ENCODE measurements at regions of chr21 and their contacts with region 1.

Region 1: DNA sequence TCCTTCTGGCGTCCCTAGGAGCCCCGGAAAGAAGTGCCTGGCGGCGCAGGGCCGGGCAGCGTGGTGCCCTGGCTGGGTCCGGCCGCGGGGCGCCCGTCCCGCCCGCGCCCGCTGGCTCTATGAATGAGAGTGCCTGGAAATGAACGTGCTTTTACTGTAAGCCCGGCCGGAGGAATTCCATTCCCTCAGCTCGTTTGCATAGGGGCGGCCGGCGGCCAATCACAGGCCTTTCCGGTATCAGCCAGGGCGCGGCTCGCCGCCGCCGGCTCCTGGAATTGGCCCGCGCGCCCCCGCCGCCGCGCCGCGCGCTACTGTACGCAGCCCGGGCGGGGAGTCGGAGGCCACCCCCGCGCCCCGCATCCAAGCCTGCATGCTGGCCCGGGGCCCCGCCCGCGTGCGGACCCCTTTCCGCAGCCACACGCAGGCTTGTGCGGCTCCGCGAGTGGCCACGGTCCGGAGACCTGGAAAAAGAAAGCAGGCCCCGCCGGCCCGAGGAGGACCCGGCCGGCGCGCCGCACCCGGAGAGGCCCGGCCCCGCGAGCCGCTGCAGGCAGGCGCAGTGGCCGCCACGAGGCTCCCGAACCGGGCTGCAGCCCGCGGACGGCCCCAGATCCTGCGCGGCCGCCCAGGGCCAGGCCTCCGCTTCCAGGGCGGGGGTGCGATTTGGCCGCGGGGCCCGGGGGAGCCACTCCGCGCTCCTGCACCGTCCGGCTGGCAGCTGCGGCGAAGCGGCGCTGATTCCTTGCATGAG is 160.4 kb downstream of the RUNX1 start:
- DNase-seq: peak; percentile 87
- ATAC-seq: peak; percentile 68
- H3K4me3 Mint-ChIP-seq: peak overlapping the region; percentile 85
- H3K27ac Mint-ChIP-seq: peak overlapping the region; percentile 95
- H3K4me1 Mint-ChIP-seq: peaks cover 45% of the 10 kb centered on the region
- H3K27me3 Mint-ChIP-seq: peaks cover 5% of the 10 kb centered on the region

Region 2: DNA sequence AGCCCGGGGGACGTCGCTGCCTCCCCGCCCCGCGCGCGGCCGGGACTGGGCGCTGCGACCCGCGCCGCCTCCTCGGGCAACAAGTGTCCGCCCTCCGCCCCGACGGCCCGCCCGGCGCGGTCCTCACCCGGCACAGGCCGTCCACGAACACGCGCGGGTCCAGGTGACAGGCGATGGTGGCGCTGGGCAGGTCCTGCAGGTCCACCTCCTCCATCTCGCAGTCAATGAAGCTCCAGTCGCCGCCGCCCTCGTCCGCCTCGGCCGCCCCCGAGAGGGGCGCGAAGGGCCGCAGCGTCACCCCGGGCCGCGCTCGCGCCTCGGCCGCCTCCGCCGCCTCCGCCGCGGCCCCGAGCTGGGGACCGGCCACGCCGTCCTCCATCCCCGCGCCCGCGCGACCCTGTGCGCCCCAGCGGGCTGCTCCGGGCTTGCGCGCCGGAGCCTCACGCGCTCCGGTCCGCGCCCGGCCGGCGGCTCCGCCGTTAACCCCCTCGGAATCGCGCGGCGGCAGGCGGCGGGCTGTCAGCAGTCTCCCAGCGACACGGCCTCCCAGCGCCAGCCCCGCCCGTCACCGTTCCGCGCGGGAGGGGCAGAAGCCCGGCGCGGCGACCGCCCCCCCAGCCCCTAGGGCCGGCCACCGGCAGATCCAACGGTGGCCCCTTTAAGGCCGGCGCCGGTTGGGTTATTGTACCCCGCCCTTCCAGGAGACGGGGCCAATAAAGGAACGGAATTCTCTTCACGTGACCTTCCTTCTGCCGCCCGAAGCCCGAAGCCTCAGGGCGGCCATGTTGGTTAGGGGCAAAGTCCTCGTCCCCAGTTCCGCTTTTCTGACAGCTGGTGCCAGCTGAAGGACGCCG is 273.9 kb before region 1 on chr21 and contains the start of gene RCAN1:
- CTCF ChIA-PET with region 1: no interaction called
- DNase-seq: peak; percentile 93
- ATAC-seq: peak; percentile 98
- H3K4me3 Mint-ChIP-seq: peak within 1 kb of the TSS; percentile 80
- H3K27ac Mint-ChIP-seq: peak within 1 kb of the TSS; percentile 83
- H3K4me1 Mint-ChIP-seq: peaks cover 20% of the 10 kb centered on the region
- H3K27me3 Mint-ChIP-seq: peaks cover 20% of the 10 kb centered on the region
- total RNA-seq, gene RCAN1: 6.5 to 13.6 TPM

Region 3: GRCh38 chr21:34807146-34807880 is 81.4 kb before region 1 on chr21:
- CTCF ChIA-PET with region 1: interaction called, 16 read pairs
- DNase-seq: peak; percentile 85
- ATAC-seq: peak; percentile 89
- H3K4me3 Mint-ChIP-seq: no peak overlapping the region
- H3K27ac Mint-ChIP-seq: peak overlapping the region; percentile 84
- H3K4me1 Mint-ChIP-seq: peaks cover 75% of the 10 kb centered on the region
- H3K27me3 Mint-ChIP-seq: no peaks in the 10 kb centered on the region

Region 4: GRCh38 chr21:34933609-34934335 is 45.0 kb after region 1 on chr21:
- CTCF ChIA-PET with region 1: interaction called, 15 read pairs
- DNase-seq: peak; percentile 50
- ATAC-seq: peak; percentile 95
- H3K4me3 Mint-ChIP-seq: peak overlapping the region; percentile 62
- H3K27ac Mint-ChIP-seq: peak overlapping the region; percentile 96
- H3K4me1 Mint-ChIP-seq: peaks cover 70% of the 10 kb centered on the region
- H3K27me3 Mint-ChIP-seq: no peaks in the 10 kb centered on the region

Region 5: GRCh38 chr21:35026617-35027562 is 138.1 kb after region 1 on chr21:
- CTCF ChIA-PET with region 1: interaction called, 29 read pairs
- DNase-seq: peak; percentile 94
- ATAC-seq: peak; percentile 85
- H3K4me3 Mint-ChIP-seq: peak overlapping the region; percentile 77
- H3K27ac Mint-ChIP-seq: peak overlapping the region; percentile 100
- H3K4me1 Mint-ChIP-seq: peaks cover 80% of the 10 kb centered on the region
- H3K27me3 Mint-ChIP-seq: no peaks in the 10 kb centered on the region

Region 6: GRCh38 chr21:35400233-35400957 is 511.7 kb after region 1 on chr21:
- CTCF ChIA-PET with region 1: interaction called, 25 read pairs
- DNase-seq: peak; percentile 46
- ATAC-seq: peak; percentile 80
- H3K4me3 Mint-ChIP-seq: no peak overlapping the region
- H3K27ac Mint-ChIP-seq: no peak overlapping the region
- H3K4me1 Mint-ChIP-seq: peaks cover 13% of the 10 kb centered on the region
- H3K27me3 Mint-ChIP-seq: peaks cover 34% of the 10 kb centered on the region